Calu3 (cell line): ENCODE measurements at regions of chr4 and their contacts with region 1.

Region 1: GRCh38 chr4:143768007-143768591 is 67.6 kb upstream of the FREM3 start:
- DNase-seq: peak; percentile 2
- H3K4me3 Mint-ChIP-seq: no peak overlapping the region
- H3K27ac Mint-ChIP-seq: no peak overlapping the region
- H3K4me1 Mint-ChIP-seq: no peaks in the 10 kb centered on the region
- H3K27me3 Mint-ChIP-seq: no peaks in the 10 kb centered on the region
- CTCF ChIP-seq: no peak

Region 2: GRCh38 chr4:143575331-143575730 is 192.8 kb before region 1 on chr4:
- CTCF ChIA-PET with region 1: no interaction called
- intact Hi-C with region 1: loop called (anchors 10 kb)
- DNase-seq: no peak
- H3K4me3 Mint-ChIP-seq: no peak overlapping the region
- H3K27ac Mint-ChIP-seq: no peak overlapping the region
- H3K4me1 Mint-ChIP-seq: no peaks in the 10 kb centered on the region
- H3K27me3 Mint-ChIP-seq: no peaks in the 10 kb centered on the region
- CTCF ChIP-seq: no peak